Posterior vena cava (tissue), 2 donors: ENCODE measurements at regions of chr11 and their contacts with region 1.

Region 1: DNA sequence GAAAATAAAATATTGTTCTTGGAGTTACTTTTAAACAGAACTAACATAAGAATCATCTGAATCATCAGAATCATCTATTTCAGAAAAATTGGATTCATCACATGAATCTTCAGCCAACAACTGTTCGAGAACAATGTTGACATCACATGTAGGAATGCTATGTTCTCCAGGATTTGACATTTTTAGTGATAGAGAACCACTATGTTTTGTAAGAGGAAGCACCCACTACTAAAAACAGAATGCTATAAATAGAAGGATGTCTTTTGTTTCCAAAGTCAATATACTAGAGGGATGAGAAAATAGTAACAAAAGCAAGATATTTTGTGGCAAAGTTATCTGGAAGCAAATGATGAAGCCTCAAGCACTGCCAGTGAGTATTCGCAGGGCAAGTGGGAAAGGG is 263.4 kb upstream of the DDI1 start:
- DNase-seq: no peak

Region 2: DNA sequence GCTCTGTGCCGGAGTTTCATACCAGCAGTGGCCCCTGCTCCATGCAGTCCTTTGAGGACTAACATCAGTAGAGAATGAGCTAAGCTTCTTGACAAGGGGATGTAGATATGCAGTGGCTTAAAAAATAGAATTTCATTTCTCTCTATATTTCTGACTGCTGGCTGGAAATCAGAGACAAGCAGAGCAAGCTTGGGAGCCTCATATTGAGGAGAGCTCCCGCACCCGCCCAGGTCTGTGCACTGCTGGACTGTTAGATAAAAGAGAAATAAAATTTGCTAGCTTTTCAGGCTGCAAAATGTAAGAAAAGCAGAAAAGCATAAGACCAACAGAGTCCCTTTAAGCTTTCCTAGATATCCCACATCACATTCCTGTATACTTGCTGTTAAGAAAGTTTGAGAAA is 1273.9 kb before region 1 on chr11:
- intact Hi-C with region 1: no loop called
- DNase-seq: no peak

Region 3: DNA sequence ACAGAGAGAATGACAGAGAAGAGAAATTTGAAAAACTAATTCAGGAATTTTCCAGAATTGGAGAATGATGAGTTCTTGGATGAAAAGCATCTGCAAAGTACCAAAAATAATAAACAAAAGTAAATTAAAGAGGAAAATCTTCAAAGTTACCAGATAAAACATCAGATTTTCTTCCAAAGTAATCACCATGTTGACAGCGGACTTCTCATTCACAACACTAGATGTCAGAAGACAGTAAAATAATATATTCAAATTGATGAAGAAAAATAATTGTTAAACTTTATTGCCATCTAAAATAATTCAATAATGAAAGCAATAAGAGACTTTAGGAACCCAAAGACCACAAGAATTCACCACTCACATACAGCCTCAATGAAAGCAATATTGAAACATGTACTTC is 308.6 kb before region 1 on chr11:
- intact Hi-C with region 1: loop called in 1 of 2 experiments (anchors 5 kb)
- DNase-seq: no peak

Region 4: GRCh38 chr11:103648670-103649402 is 124.2 kb before region 1 on chr11:
- intact Hi-C with region 1: no loop called
- DNase-seq: no peak

Region 5: GRCh38 chr11:103682318-103683184 is 90.5 kb before region 1 on chr11:
- intact Hi-C with region 1: loop called in 1 of 2 experiments (anchors 10 kb)
- DNase-seq: no peak

Region 6: DNA sequence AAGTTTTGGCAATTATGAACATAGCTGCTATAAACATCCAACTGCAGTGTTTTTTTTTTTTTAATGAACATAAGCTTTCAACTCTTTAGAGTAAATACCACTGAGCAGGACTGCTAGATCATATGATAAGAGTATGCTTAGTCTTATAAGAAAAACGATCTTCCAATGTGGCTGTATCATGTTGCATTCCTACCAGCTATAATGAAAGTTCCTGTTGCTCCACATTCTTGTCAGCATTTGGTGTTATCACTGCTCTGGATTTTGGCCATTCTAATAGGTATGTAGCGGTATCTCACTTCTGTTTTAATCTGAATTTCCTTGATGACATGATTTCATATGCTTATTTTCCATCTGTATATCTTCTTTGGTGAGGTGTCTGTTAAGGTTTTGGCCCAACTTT is 340.5 kb after region 1 on chr11:
- intact Hi-C with region 1: loop called in 1 of 2 experiments (anchors 2 kb)
- DNase-seq: no peak